Caco-2 (cell line): ENCODE measurements at regions of chr2 and their contacts with region 1.

Region 1: DNA sequence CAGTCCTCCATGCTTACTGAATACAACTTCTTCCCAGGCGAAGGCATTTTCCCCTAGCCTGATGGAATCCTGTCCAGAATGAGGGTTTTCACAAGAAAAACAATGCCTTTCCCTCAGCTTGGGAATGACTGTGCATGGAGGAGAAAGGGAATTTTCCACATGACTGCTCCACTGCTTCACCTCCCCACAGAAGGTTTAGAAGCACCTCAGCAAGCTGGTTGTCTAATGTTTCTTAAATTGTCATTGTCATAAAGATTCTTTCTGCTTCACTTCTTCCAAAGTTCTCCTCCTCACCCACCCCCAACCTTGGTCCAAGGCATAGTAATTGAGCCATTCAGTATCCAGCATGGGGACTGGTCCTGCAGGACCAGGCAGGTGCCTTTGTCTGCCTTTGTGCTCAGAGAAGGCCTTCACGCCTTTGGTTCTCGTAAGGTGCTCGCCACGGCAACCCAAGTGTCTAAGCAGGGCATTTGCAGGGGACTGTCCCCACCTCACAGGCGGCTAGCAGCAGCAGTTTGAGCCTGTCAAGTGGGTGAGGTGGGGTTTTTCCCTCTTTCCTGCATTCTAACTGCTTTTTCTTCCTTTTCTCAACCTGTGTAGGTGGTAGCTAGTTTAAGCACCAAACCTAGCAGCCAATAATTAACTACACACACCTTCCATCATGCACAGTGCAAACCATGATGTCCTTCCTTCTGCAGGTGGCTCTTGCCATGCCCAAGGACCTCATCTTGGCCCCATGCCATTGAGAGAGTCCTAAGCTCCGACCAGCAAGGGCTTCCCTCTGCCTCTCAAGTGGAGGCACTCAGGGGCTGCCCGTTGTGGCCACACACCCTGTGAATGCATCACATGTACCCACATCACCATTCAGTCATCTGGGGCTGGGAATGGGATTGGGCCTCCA is 65.7 kb upstream of the BCL2L11 start:
- DNase-seq: no peak
- H3K4me3 ChIP-seq: no peak overlapping the region
- H3K4me3 Mint-ChIP-seq: no peak overlapping the region
- H3K27ac Mint-ChIP-seq: no peak overlapping the region
- H3K4me1 ChIP-seq: peaks cover 11% of the 10 kb centered on the region
- H3K4me1 Mint-ChIP-seq: peaks cover 10% of the 10 kb centered on the region
- H3K27me3 ChIP-seq: no peaks in the 10 kb centered on the region
- H3K27me3 Mint-ChIP-seq: peaks cover 2% of the 10 kb centered on the region
- CTCF ChIP-seq: no peak

Region 2: GRCh38 chr2:110741491-110741980 is 313.5 kb before region 1 on chr2:
- CTCF ChIA-PET with region 1: no interaction called
- POLR2A ChIA-PET with region 1: interaction called, 12 read pairs
- intact Hi-C with region 1: no loop called
- DNase-seq: peak; percentile 74 to 81
- H3K4me3 ChIP-seq: no peak overlapping the region
- H3K4me3 Mint-ChIP-seq: peak overlapping the region; percentile 52
- H3K27ac Mint-ChIP-seq: peak overlapping the region; percentile 69
- H3K4me1 ChIP-seq: peaks cover 54% of the 10 kb centered on the region
- H3K4me1 Mint-ChIP-seq: peaks cover 44% of the 10 kb centered on the region
- H3K27me3 ChIP-seq: no peaks in the 10 kb centered on the region
- H3K27me3 Mint-ChIP-seq: no peaks in the 10 kb centered on the region
- CTCF ChIP-seq: peak in 1 of 2 experiments; percentile 50

Region 3: GRCh38 chr2:110807522-110807921 is 247.5 kb before region 1 on chr2:
- CTCF ChIA-PET with region 1: interaction called, 3 read pairs
- POLR2A ChIA-PET with region 1: no interaction called
- intact Hi-C with region 1: loop called (anchors 1 kb)
- DNase-seq: no peak
- H3K4me3 ChIP-seq: no peak overlapping the region
- H3K4me3 Mint-ChIP-seq: no peak overlapping the region
- H3K27ac Mint-ChIP-seq: no peak overlapping the region
- H3K4me1 ChIP-seq: no peaks in the 10 kb centered on the region; the same call in 1 of the 2 replicates
- H3K4me1 Mint-ChIP-seq: no peaks in the 10 kb centered on the region
- H3K27me3 ChIP-seq: no peaks in the 10 kb centered on the region
- H3K27me3 Mint-ChIP-seq: no peaks in the 10 kb centered on the region
- CTCF ChIP-seq: no peak

Region 4: GRCh38 chr2:111032721-111033429 is 22.2 kb before region 1 on chr2:
- CTCF ChIA-PET with region 1: interaction called, 3 read pairs
- POLR2A ChIA-PET with region 1: no interaction called
- intact Hi-C with region 1: loop called (anchors 1 kb)
- DNase-seq: peak; percentile 81 to 92
- H3K4me3 ChIP-seq: no peak overlapping the region
- H3K4me3 Mint-ChIP-seq: peak overlapping the region; percentile 56
- H3K27ac Mint-ChIP-seq: peak overlapping the region; percentile 97
- H3K4me1 ChIP-seq: peaks cover 35% of the 10 kb centered on the region
- H3K4me1 Mint-ChIP-seq: peaks cover 43% of the 10 kb centered on the region
- H3K27me3 ChIP-seq: no peaks in the 10 kb centered on the region
- H3K27me3 Mint-ChIP-seq: no peaks in the 10 kb centered on the region
- CTCF ChIP-seq: no peak